HepG2 (cell line): ENCODE measurements at regions of chr7 and their contacts with region 1.

Region 1: DNA sequence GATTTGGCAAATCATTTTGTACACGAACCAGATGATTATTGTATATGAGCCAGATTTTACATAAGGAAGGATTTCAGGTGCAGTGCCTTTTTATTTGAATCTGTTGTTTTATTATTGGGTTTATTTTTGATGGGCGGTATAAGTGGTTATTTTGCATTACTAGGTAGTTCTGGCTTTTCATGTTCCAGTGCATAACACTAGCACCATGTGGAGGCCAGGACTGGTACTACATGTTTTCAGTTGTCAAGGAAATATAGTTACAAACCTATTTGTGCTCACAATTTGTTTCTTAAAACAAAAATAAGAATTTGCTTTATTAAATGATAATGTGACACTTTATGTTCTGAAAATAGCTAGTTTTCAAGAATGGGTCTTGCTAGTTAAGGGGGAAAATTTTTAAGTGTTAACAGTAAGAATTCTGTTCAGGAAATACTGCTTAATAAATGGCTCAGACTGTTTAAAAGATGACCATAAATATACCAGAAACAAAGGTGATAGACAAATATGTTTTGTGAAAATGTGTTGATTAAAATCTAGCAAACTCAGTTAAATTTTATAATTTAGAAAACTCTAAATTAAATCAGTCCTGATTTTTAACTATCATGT is 7.1 kb upstream of the SEMA3E start:
- DNase-seq: peak; percentile 26
- ATAC-seq: peak; percentile 81
- H3K4me3 ChIP-seq: no peak overlapping the region
- H3K27ac ChIP-seq: no peak overlapping the region
- H3K4me1 ChIP-seq: no peaks in the 10 kb centered on the region
- H3K27me3 ChIP-seq: no peaks in the 10 kb centered on the region
- CTCF ChIP-seq: peak; percentile 68
- EP300 ChIP-seq: no peak
- POLR2A ChIP-seq: no peak
- RAD21 ChIP-seq: no peak

Region 2: DNA sequence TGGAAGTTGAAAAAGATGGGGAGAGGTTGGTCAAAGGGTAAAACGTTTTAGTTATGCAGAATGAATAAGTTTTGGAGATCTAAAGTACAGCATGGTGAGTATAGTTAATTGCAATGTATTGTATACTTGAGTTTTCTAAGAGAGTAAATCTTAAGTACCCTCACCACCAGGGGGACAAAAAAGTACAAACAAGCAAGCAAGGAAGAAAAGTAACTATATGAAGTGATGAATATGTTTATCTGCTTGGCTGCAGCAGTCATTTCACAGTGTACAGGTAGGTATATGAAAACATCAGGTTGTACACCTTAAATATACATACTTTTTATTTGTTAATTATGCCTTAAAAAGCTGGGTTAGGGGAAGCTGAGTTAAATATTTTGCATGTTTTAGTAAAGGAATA is 650.6 kb before region 1 on chr7:
- CTCF ChIA-PET with region 1: no interaction called
- POLR2A ChIA-PET with region 1: no interaction called
- in situ Hi-C with region 1: no loop called
- intact Hi-C with region 1: loop called (anchors 10 kb)
- DNase-seq: no peak
- ATAC-seq: no peak
- H3K4me3 ChIP-seq: no peak overlapping the region
- H3K27ac ChIP-seq: no peak overlapping the region
- H3K4me1 ChIP-seq: no peaks in the 10 kb centered on the region
- H3K27me3 ChIP-seq: no peaks in the 10 kb centered on the region
- CTCF ChIP-seq: no peak
- EP300 ChIP-seq: no peak
- POLR2A ChIP-seq: no peak
- RAD21 ChIP-seq: no peak